Activated CD4-positive, alpha-beta T cell treated with anti-CD3 and anti-CD28 coated beads, Interleukin-2, amount 10 ng/mL, durations not matched to agents 24 days and 14 days (primary cell): ENCODE measurements at regions of chr11 and their contacts with region 1.

Region 1: GRCh38 chr11:128965485-128965884 is 22.8 kb upstream of the TP53AIP1 start:
- DNase-seq: peak; percentile 65
- H3K4me3 Mint-ChIP-seq: peak overlapping the region; percentile 47
- H3K27ac Mint-ChIP-seq: peak overlapping the region; percentile 68
- H3K4me1 Mint-ChIP-seq: peaks cover 42% of the 10 kb centered on the region
- H3K27me3 Mint-ChIP-seq: no peaks in the 10 kb centered on the region

Region 2: GRCh38 chr11:128985880-128986279 is 20.4 kb after region 1 on chr11:
- intact Hi-C with region 1: loop called (anchors 1 kb)
- DNase-seq: peak; percentile 48
- H3K4me3 Mint-ChIP-seq: no peak overlapping the region
- H3K27ac Mint-ChIP-seq: no peak overlapping the region
- H3K4me1 Mint-ChIP-seq: peaks cover 7% of the 10 kb centered on the region
- H3K27me3 Mint-ChIP-seq: no peaks in the 10 kb centered on the region

Region 3: DNA sequence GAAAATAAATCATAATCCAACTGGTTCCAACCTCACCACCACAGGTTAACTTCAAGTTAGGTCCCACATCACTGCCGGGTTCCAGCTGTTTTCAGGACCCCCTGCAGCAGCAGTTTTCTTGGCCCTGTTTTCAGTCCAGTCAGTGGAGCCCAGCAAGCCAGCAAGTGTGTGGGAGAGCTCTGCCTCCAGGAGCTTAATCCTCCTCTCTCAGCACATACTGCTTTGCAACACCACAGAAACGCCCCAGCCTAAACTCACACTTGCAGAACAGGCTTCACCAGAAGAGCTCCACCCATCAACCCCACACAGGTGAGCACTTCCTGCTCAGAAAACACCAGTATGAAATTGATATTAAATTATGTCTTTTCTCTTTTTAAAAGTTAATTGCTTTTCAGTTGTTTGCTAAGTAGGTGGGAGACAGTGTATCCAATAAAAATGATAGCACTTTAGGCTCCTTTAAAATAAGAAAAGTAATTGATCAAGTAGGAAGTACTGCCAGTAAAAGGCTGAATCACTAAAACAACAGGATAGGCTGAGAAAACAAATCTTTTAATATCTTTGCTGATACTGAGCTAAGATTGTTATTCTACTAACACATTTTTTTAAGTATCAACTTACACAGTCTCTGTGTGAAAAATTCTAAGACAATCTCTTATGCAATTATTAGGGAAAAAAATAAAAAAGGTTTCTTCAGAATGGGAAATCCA is 58.6 kb after region 1 on chr11:
- intact Hi-C with region 1: loop called (anchors 5 kb)
- DNase-seq: peak; percentile 67
- H3K4me3 Mint-ChIP-seq: no peak overlapping the region
- H3K27ac Mint-ChIP-seq: no peak overlapping the region
- H3K4me1 Mint-ChIP-seq: peaks cover 6% of the 10 kb centered on the region
- H3K27me3 Mint-ChIP-seq: no peaks in the 10 kb centered on the region